Colonic mucosa (tissue), 4 donors: ENCODE measurements at regions of chr12 and their contacts with region 1.

Region 1: DNA sequence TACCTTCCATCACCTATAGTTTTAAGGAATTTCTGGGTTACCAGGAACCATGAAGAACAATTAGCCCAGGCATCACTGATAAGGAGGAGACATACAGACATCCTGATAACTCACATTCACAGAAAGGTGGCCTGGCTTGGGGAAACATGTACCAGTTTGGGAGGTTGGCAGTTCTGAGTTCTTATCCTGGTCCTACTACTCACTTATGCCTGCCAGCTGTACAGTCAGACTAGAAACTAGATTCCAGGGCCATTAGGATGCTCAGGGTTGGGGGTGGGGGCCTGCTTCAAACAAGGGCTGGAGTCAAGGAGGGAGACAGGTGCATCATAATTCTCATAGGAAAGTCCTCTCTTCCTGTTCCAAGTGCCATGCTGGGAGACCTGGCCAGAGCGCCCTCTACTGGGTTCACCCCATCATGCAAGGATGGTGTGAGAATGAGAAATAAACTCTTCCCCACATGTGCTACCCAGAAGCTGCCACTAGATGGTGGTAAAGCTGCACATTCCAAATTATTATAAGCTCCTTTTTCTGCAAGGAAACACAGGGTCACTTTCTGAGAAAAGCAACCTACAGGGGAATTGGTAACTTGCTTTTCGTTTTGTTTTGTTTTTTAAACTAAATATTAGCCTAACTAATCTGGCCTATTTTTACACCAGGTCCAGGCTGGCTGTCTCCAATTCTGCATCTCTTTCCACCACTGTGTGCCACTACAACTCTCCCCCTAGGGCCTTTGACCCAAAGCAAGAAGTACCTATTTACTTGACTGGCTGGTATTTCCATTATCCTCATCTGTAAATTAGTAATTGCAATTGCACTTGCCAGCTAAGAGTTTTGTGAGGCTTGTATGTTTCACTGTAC is 14.5 kb downstream of the OAS2 start:
- DNase-seq: peak; percentile 72
- H3K4me3 ChIP-seq: no peak overlapping the region
- H3K27ac ChIP-seq: no peak overlapping the region
- H3K4me1 ChIP-seq: no peaks in the 10 kb centered on the region
- H3K27me3 ChIP-seq: no peaks in the 10 kb centered on the region
- CTCF ChIP-seq: peak; percentile 85

Region 2: GRCh38 chr12:113030875-113031525 is 38.2 kb after region 1 on chr12:
- intact Hi-C with region 1: loop called (anchors 5 kb)
- DNase-seq: no peak
- H3K4me3 ChIP-seq: no peak overlapping the region
- H3K27ac ChIP-seq: no peak overlapping the region
- H3K4me1 ChIP-seq: no peaks in the 10 kb centered on the region
- H3K27me3 ChIP-seq: peaks cover 4% of the 10 kb centered on the region
- CTCF ChIP-seq: peak; percentile 71

Region 3: DNA sequence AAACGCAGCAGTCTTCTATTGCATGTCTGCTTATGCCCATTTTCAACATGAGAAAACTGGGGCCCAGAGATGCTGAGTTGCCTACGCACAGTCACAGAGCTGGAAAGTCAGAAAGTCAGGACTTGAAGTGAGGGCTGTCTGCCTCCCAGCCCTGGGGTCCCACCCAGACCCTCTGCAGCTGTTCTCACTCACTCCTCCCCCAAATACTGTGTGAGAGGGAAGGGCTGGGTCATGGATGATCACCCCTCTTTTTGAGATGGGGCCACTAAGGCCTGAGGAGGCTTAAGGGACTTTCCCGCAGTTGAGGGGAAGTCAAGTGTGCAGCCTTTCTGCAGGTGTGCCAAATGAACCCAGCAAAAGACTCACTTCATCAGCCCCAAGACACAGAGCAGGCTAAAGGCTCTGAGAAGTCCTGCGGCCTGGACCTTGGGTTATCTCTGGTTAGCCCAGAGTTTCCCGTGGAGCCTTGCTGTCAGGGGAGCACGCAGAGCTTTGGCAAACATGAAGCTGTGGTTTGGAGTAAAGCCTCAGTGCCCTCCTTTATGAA is 82.4 kb after region 1 on chr12:
- intact Hi-C with region 1: no loop called
- DNase-seq: no peak
- H3K4me3 ChIP-seq: no peak overlapping the region
- H3K27ac ChIP-seq: no peak overlapping the region
- H3K4me1 ChIP-seq: no peaks in the 10 kb centered on the region
- H3K27me3 ChIP-seq: peaks cover 8% of the 10 kb centered on the region
- CTCF ChIP-seq: no peak

Region 4: GRCh38 chr12:113135178-113136127 is 142.7 kb after region 1 on chr12 and contains the start of gene RASAL1:
- intact Hi-C with region 1: no loop called
- DNase-seq: peak; percentile 91
- H3K4me3 ChIP-seq: peak within 1 kb of the TSS; percentile 53
- H3K27ac ChIP-seq: peak within 1 kb of the TSS; percentile 68
- H3K4me1 ChIP-seq: peaks cover 7% of the 10 kb centered on the region
- H3K27me3 ChIP-seq: no peaks in the 10 kb centered on the region
- CTCF ChIP-seq: peak; percentile 68
- total RNA-seq, gene RASAL1: 9.0 to 10.2 TPM

Region 5: DNA sequence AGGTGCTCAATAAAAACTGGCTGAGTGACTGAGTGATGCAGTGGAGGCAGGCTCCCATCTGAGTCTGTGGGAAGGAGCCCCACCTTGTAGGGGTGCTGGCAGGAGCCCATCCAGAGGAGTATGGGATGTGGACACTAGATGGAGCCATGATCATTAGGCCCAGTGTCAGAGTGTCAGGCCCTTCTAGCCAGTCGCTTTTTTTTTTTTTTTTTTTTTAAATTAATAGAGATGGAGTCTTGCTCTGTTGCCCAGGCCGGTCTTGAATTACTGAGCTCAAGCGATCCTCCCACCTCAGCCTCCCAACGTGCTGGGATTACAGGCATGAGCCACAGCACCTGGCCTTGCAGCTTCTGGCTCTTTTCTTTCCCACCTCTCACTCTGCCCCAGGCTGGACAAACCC is 204.2 kb after region 1 on chr12:
- intact Hi-C with region 1: no loop called
- DNase-seq: peak; percentile 79
- H3K4me3 ChIP-seq: no peak overlapping the region
- H3K27ac ChIP-seq: no peak overlapping the region
- H3K4me1 ChIP-seq: no peaks in the 10 kb centered on the region
- H3K27me3 ChIP-seq: no peaks in the 10 kb centered on the region
- CTCF ChIP-seq: peak; percentile 67